Naive thymus-derived CD4-positive, alpha-beta T cell (primary cell): ENCODE measurements at regions of chr17 and their contacts with region 1.

Region 1: GRCh38 chr17:35119368-35120165 is at the start of gene RAD51D:
- DNase-seq: peak; percentile 71 to 90 (median 83)
- ATAC-seq: peak; percentile 96
- H3K4me3 ChIP-seq: peak within 1 kb of the TSS; percentile 82
- H3K4me3 Mint-ChIP-seq: peak within 1 kb of the TSS; percentile 87 to 97 (median 94)
- H3K27ac ChIP-seq: peak within 1 kb of the TSS; percentile 81
- H3K27ac Mint-ChIP-seq: peak within 1 kb of the TSS; percentile 88 to 96 (median 93)
- H3K4me1 ChIP-seq: peaks cover 14 to 15% of the 10 kb centered on the region in 2 donors
- H3K4me1 Mint-ChIP-seq: peaks cover 23 to 45% (median 33%) of the 10 kb centered on the region in 7 donors
- H3K27me3 ChIP-seq: no peaks in the 10 kb centered on the region
- H3K27me3 Mint-ChIP-seq: no peaks in the 10 kb centered on the region
- total RNA-seq, gene RAD51D: 15.0 to 34.2 (median 25.4) TPM

Region 2: GRCh38 chr17:34420254-34420766 is 699.3 kb before region 1 on chr17:
- CTCF ChIA-PET with region 1: interaction called, 6 read pairs
- POLR2A ChIA-PET with region 1: interaction called, 3 read pairs
- intact Hi-C with region 1: loop called (anchors 1 to 2 kb)
- DNase-seq: peak; percentile 20 to 68 (median 50)
- ATAC-seq: peak; percentile 67
- H3K4me3 ChIP-seq: no peak overlapping the region
- H3K4me3 Mint-ChIP-seq: no peak overlapping the region
- H3K27ac ChIP-seq: no peak overlapping the region
- H3K27ac Mint-ChIP-seq: peak overlapping the region in 1 of 9 donors; percentile 31
- H3K4me1 ChIP-seq: no peaks in the 10 kb centered on the region
- H3K4me1 Mint-ChIP-seq: peaks cover 0 to 8% (median 4%) of the 10 kb centered on the region in 7 donors
- H3K27me3 ChIP-seq: no peaks in the 10 kb centered on the region
- H3K27me3 Mint-ChIP-seq: peaks cover 19 to 58% (median 40%) of the 10 kb centered on the region in 5 donors

Region 3: GRCh38 chr17:34465789-34466188 is 653.8 kb before region 1 on chr17:
- CTCF ChIA-PET with region 1: no interaction called
- POLR2A ChIA-PET with region 1: no interaction called
- intact Hi-C with region 1: no loop called
- DNase-seq: no peak
- ATAC-seq: no peak
- H3K4me3 ChIP-seq: no peak overlapping the region
- H3K4me3 Mint-ChIP-seq: no peak overlapping the region
- H3K27ac ChIP-seq: no peak overlapping the region
- H3K27ac Mint-ChIP-seq: no peak overlapping the region
- H3K4me1 ChIP-seq: no peaks in the 10 kb centered on the region
- H3K4me1 Mint-ChIP-seq: no peaks in the 10 kb centered on the region
- H3K27me3 ChIP-seq: no peaks in the 10 kb centered on the region
- H3K27me3 Mint-ChIP-seq: peaks cover 6 to 37% (median 13%) of the 10 kb centered on the region in 5 donors

Region 4: GRCh38 chr17:34584805-34585416 is 534.7 kb before region 1 on chr17:
- CTCF ChIA-PET with region 1: no interaction called
- POLR2A ChIA-PET with region 1: no interaction called
- intact Hi-C with region 1: loop called in 1 of 2 experiments (anchors 1 kb)
- DNase-seq: peak in 4 of 9 donors; percentile 21 to 35 (median 32)
- ATAC-seq: peak; percentile 51
- H3K4me3 ChIP-seq: no peak overlapping the region
- H3K4me3 Mint-ChIP-seq: no peak overlapping the region
- H3K27ac ChIP-seq: no peak overlapping the region
- H3K27ac Mint-ChIP-seq: no peak overlapping the region
- H3K4me1 ChIP-seq: peaks cover 0 to 6% of the 10 kb centered on the region in 2 donors
- H3K4me1 Mint-ChIP-seq: peaks cover 0 to 15% (median 4%) of the 10 kb centered on the region in 7 donors
- H3K27me3 ChIP-seq: peaks cover 0 to 7% of the 10 kb centered on the region in 2 donors
- H3K27me3 Mint-ChIP-seq: peaks cover 41 to 78% (median 52%) of the 10 kb centered on the region in 5 donors

Region 5: DNA sequence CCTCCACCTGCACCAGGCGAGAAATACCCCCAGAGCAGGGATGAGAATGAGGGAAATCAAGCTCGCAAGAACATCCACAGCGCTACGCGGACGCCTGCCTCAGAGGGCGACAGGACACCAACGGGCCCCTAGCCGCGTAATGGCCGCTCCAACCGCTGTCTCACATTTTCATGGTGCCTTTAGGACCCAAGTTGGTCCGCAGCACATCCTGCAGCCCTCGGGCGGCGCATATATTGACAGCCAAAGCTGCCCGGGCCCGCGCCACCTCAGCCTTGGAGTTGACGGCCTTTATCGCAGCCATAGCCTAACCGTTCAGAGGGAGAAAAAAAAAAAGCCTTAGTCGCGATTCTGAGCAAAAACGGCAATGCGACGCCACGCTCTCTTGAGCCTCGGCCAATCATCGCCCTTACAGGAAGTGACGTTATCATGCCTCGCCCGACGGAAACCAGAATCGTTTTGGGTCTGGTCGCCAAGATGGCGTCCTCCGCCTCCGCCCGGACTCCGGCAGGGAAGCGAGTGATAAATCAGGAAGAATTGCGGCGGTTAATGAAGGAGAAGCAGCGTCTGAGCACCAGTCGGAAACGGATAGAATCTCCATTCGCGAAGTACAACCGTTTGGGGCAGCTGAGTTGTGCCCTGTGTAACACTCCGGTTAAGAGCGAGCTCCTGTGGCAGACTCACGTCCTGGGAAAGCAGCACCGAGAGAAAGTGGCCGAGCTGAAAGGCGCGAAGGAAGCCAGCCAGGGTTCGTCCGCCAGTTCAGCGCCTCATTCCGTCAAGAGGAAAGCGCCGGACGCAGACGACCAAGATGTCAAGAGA is 158.3 kb before region 1 on chr17 and contains the starts of genes CCT6B and ZNF830:
- CTCF ChIA-PET with region 1: interaction called, 4 read pairs
- POLR2A ChIA-PET with region 1: no interaction called
- intact Hi-C with region 1: loop called (anchors 1 kb)
- DNase-seq: peak; percentile 69 to 94 (median 91)
- ATAC-seq: peak; percentile 95
- H3K4me3 ChIP-seq: peak within 1 kb of the TSS; percentile 94
- H3K4me3 Mint-ChIP-seq: peak within 1 kb of the TSS; percentile 97 to 100 (median 99)
- H3K27ac ChIP-seq: peak within 1 kb of the TSS; percentile 92
- H3K27ac Mint-ChIP-seq: peak within 1 kb of the TSS; percentile 98 to 100 (median 99)
- H3K4me1 ChIP-seq: peaks cover 14 to 16% of the 10 kb centered on the region in 2 donors
- H3K4me1 Mint-ChIP-seq: peaks cover 19 to 38% (median 33%) of the 10 kb centered on the region in 7 donors
- H3K27me3 ChIP-seq: no peaks in the 10 kb centered on the region
- H3K27me3 Mint-ChIP-seq: peaks cover 0 to 10% (median 5%) of the 10 kb centered on the region in 5 donors
- total RNA-seq, gene CCT6B: 1.6 to 3.8 (median 2.4) TPM
- total RNA-seq, gene ZNF830: 26.9 to 47.3 (median 44.9) TPM

Region 6: DNA sequence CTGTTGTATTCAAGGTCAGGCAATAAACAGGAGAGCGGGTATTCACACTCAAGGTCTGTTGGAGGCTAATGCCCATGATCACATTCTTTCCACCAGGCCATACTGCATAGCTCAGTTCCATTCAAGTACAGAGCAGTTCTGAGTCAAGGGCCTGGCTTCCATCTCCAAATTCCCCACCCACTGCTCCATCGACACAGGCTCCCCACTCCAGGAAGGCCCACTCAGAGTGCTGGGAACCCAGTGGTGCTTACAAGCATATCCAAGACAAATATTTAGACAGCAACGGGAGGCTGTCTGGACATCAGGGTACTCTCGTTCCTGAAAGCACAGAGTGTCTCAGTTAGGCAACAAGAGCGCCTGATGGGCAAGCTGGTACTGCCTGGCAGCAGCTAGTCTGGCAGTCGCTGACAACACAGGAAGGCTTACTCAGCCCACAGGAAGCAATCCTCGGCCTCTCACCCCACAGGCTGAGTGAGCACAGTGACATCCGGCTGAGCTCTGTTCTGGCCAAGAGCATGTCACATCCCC is 97.0 kb before region 1 on chr17:
- CTCF ChIA-PET with region 1: interaction called, 13 read pairs
- POLR2A ChIA-PET with region 1: interaction called, 8 read pairs
- intact Hi-C with region 1: no loop called
- DNase-seq: peak; percentile 37 to 65 (median 56)
- ATAC-seq: peak; percentile 99
- H3K4me3 ChIP-seq: peak overlapping the region; percentile 18
- H3K4me3 Mint-ChIP-seq: peak overlapping the region; percentile 10 to 84 (median 70)
- H3K27ac ChIP-seq: peak overlapping the region; percentile 74
- H3K27ac Mint-ChIP-seq: peak overlapping the region; percentile 92 to 97 (median 96)
- H3K4me1 ChIP-seq: peaks cover 28 to 36% of the 10 kb centered on the region in 2 donors
- H3K4me1 Mint-ChIP-seq: peaks cover 27 to 79% (median 60%) of the 10 kb centered on the region in 7 donors
- H3K27me3 ChIP-seq: no peaks in the 10 kb centered on the region
- H3K27me3 Mint-ChIP-seq: no peaks in the 10 kb centered on the region

Region 7: GRCh38 chr17:35747540-35748017 is 628.0 kb after region 1 on chr17:
- CTCF ChIA-PET with region 1: interaction called, 6 read pairs
- POLR2A ChIA-PET with region 1: no interaction called
- intact Hi-C with region 1: loop called in 1 of 2 experiments (anchors 5 kb)
- DNase-seq: peak; percentile 61 to 83 (median 75)
- ATAC-seq: peak; percentile 93
- H3K4me3 ChIP-seq: no peak overlapping the region
- H3K4me3 Mint-ChIP-seq: no peak overlapping the region
- H3K27ac ChIP-seq: no peak overlapping the region
- H3K27ac Mint-ChIP-seq: no peak overlapping the region
- H3K4me1 ChIP-seq: no peaks in the 10 kb centered on the region
- H3K4me1 Mint-ChIP-seq: peaks cover 0 to 21% (median 3%) of the 10 kb centered on the region in 7 donors
- H3K27me3 ChIP-seq: peaks cover 0 to 10% of the 10 kb centered on the region in 2 donors
- H3K27me3 Mint-ChIP-seq: peaks cover 35 to 50% (median 42%) of the 10 kb centered on the region in 5 donors